Activated naive CD4-positive, alpha-beta T cell treated with anti-CD3 and anti-CD28 coated beads, Interleukin-2, amount 10 ng/mL, durations not matched to agents 7 days and 5 days (primary cell): ENCODE measurements at regions of chr2 and their contacts with region 1.

Region 1: GRCh38 chr2:235595422-235596010 is 101.7 kb downstream of the AGAP1 start:
- DNase-seq: peak; percentile 62
- H3K4me3 Mint-ChIP-seq: no peak overlapping the region
- H3K27ac Mint-ChIP-seq: no peak overlapping the region
- H3K4me1 Mint-ChIP-seq: no peaks in the 10 kb centered on the region
- H3K27me3 Mint-ChIP-seq: peaks cover 6% of the 10 kb centered on the region

Region 2: DNA sequence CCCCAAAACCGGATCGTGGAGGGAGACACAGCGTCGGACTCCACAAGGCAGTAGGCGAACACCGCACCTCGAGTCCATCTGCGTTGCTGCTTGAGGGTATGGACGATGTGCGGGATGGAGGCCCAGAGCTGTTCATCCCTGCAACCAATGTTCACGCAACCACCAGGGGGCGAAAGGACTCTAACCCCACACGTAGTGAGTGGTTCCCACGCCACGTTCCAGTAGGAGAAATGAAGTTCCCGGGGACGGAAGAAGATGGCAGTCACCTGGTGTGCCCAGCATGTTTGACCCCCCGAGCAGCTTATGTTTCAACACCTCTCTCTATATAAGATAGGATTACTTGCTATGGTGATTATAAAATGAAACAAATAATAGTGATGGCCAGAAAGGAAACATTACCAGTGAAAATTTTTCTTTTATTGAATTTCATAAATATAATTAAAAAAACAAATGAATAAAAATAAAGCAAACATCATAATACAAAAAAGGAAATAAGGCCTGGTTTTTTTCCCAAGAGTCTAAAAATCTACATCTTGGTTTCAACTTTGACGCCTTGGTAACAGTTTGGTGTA is 459.4 kb before region 1 on chr2:
- CTCF ChIA-PET with region 1: interaction called, 21 read pairs
- DNase-seq: peak; percentile 64
- H3K4me3 Mint-ChIP-seq: no peak overlapping the region
- H3K27ac Mint-ChIP-seq: no peak overlapping the region
- H3K4me1 Mint-ChIP-seq: no peaks in the 10 kb centered on the region
- H3K27me3 Mint-ChIP-seq: peaks cover 21% of the 10 kb centered on the region

Region 3: GRCh38 chr2:235746257-235747084 is 151.0 kb after region 1 on chr2:
- CTCF ChIA-PET with region 1: interaction called, 60 read pairs
- DNase-seq: peak; percentile 64
- H3K4me3 Mint-ChIP-seq: no peak overlapping the region
- H3K27ac Mint-ChIP-seq: no peak overlapping the region
- H3K4me1 Mint-ChIP-seq: no peaks in the 10 kb centered on the region
- H3K27me3 Mint-ChIP-seq: peaks cover 8% of the 10 kb centered on the region